ENCODE measurements at regions of chr11 and their contacts with region 1.

Region 1: DNA sequence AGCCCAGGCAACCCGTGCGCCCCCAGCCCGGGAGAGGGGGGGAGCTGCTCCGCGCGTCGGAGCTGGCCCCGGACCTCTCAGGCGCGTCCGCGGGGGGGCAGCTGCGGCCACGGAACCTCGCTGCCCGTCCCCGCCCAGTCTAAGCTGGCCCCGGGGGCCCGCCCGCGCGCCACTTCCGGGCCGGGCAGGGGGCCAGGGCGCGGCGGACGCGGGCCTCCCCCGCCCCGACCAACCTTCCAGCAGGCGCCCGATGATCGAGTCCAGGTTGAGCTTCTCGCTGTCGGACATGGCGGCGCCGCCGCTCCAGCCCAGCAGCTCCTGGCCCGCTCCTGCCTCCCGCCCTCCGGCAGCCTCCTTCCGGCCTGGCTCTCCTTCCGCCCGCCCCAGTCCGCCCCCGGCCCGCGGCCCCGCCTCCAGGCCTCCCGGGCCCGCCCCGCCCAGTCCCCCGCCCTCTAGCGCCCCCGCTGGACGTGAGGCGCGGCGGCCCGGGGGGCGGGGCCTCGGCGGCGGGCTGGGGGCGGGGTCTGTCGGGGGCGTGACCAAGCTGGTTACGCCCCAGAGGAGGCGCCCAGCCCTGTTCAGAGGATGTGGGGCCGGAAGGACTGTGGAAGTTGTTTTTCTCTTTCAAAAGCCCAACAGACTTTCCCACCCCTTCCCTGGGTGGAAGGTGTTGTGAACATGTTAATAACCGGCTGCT is at the start of gene PPP1CA:
- DNase-seq: peak; percentile 91 to 95 (median 93)
- H3K4me3 ChIP-seq: peak within 1 kb of the TSS; percentile 91
- H3K27ac ChIP-seq: peak within 1 kb of the TSS; percentile 19 to 86
- H3K4me1 ChIP-seq: peaks cover 1% of the 10 kb centered on the region
- H3K27me3 ChIP-seq: no peaks in the 10 kb centered on the region
- CTCF ChIP-seq: peak; percentile 27 to 36 (median 29)
- EP300 ChIP-seq: no peak
- POLR2A ChIP-seq: peak; percentile 70
- total RNA-seq, gene PPP1CA: 32.2 to 86.9 (median 55.5) TPM

Region 2: DNA sequence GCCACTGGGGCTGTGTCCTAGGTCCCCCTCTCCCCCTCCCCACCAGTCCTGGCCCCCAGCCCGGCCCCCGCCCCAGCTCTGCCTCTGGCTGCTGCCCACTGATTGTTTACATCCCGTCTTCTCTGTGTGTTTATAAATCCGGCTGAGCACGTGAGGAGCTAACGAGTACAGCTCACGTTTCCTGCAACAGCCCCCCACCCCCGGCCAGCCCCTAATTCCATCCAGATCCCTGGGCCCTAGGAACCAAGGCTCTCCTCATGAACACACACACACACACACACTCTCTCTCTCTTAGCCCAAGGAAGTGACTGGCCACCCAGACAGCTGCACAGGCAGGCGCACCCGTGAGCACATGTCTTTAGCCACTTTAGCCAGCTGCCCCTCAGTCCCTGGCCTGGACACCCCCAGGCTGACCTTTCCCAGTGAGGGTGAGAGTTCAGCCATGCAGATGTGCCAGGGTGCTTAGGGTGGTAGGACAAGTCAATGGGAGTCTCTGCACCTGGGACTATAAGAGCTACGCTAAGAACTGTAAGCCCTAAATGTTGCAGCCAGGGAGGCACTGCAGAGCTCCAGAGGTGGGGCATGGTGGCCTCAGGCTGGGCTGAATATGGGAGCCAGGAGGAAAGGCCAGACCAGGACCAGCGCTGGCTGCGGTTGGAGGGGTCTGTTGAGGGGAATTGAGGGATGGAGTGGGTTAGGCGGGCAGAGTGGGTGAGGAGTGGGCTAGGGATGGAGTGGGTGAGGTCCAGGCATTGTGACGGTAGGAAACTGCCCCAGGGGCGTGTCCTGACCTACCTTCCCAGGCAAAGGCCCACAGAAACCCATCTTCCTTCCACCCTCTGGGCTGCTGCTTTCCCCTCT is 31.1 kb before region 1 on chr11:
- intact Hi-C with region 1: no loop called
- DNase-seq: peak in 3 of 5 donors; percentile 36 to 55 (median 38)
- H3K4me3 ChIP-seq: no peak overlapping the region
- H3K27ac ChIP-seq: peak overlapping the region; percentile 33 to 62
- H3K4me1 ChIP-seq: peaks cover 38% of the 10 kb centered on the region
- H3K27me3 ChIP-seq: no peaks in the 10 kb centered on the region
- CTCF ChIP-seq: no peak
- EP300 ChIP-seq: no peak
- POLR2A ChIP-seq: no peak

Region 3: DNA sequence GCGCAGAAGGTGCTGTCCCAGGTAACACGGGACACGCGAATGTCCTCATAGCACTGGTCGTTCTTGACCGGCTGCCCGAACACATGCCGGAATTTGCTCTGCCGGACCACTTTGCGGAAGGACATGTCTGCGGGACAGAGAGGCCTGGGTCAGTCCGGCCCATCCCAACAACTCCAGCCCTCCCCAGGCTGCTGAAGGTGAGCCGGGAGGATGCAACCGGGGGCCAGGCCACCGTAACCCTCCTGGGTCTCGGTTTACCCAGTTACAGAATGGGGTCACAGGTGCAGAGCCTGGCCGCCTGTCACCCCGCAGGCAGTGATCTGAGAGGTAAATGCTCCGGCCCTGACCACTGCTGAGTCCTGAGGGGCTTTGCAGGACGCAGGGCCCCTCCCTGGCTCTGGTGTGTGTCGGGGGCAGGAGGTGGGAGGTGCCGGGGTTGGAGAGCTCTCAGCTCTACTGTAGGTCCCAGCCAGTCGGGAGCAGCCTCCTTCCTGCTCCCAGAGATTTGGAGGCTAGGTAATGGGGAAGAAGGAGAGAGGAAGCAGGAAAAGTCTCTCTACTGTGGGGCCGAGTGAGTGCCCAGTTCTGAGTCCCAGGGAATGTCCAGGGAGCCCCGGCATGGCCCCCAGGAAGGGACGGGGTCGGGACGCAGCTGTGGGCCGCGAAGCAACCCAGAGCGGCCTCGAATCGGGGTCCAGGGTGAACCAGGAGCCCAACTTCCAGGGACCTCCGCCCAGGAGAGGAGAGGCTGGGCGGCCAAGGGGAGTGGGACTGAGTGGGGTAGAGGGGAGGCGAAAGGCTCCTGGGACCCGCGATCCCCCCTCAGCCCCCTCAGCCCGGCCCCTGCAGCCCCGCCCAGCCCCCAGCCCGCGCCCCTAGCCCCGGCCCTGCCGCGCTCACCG is 41.1 kb after region 1 on chr11:
- intact Hi-C with region 1: loop called in 1 of 4 experiments (anchors 1 kb)
- DNase-seq: peak in 2 of 5 donors; percentile 36 to 43
- H3K4me3 ChIP-seq: peak overlapping the region; percentile 69
- H3K27ac ChIP-seq: peak overlapping the region; percentile 94
- H3K4me1 ChIP-seq: peaks cover 4% of the 10 kb centered on the region
- H3K27me3 ChIP-seq: no peaks in the 10 kb centered on the region
- CTCF ChIP-seq: no peak
- EP300 ChIP-seq: no peak
- POLR2A ChIP-seq: no peak

Region 4: DNA sequence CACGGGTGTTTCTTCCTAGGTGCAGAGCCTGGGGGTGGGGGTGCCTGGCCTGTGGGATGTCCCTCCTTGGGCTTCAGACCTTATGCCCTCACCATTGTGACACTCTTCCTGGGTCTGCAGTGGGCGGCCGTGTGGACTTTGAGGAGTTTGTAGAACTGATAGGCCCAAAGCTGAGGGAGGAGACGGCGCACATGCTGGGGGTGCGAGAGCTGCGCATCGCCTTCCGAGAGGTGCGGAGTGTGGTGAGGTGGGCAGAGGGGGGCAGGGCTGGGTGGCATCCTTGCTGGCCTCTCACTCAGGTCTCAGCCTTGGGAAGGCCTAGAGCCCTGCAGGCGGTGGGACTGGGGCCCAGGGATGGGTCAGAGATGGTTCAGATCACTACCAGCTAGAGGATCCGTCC is 55.8 kb after region 1 on chr11:
- intact Hi-C with region 1: no loop called
- DNase-seq: peak in 2 of 5 donors; percentile 13 to 14
- H3K4me3 ChIP-seq: no peak overlapping the region
- H3K27ac ChIP-seq: no peak overlapping the region
- H3K4me1 ChIP-seq: no peaks in the 10 kb centered on the region
- H3K27me3 ChIP-seq: no peaks in the 10 kb centered on the region
- CTCF ChIP-seq: no peak
- EP300 ChIP-seq: no peak
- POLR2A ChIP-seq: no peak

Region 5: GRCh38 chr11:67468835-67469811 is 67.5 kb after region 1 on chr11 and contains the start of gene TMEM134:
- intact Hi-C with region 1: loop called in 2 of 4 experiments (anchors 1 to 5 kb)
- DNase-seq: peak; percentile 90 to 94 (median 93)
- H3K4me3 ChIP-seq: peak within 1 kb of the TSS; percentile 93
- H3K27ac ChIP-seq: peak within 1 kb of the TSS; percentile 37 to 84
- H3K4me1 ChIP-seq: peaks cover 7% of the 10 kb centered on the region
- H3K27me3 ChIP-seq: no peaks in the 10 kb centered on the region
- CTCF ChIP-seq: peak in 2 of 3 donors; percentile 46 to 49
- EP300 ChIP-seq: no peak
- POLR2A ChIP-seq: peak; percentile 51
- total RNA-seq, gene TMEM134: 37.6 to 69.8 (median 44.8) TPM

Region 6: DNA sequence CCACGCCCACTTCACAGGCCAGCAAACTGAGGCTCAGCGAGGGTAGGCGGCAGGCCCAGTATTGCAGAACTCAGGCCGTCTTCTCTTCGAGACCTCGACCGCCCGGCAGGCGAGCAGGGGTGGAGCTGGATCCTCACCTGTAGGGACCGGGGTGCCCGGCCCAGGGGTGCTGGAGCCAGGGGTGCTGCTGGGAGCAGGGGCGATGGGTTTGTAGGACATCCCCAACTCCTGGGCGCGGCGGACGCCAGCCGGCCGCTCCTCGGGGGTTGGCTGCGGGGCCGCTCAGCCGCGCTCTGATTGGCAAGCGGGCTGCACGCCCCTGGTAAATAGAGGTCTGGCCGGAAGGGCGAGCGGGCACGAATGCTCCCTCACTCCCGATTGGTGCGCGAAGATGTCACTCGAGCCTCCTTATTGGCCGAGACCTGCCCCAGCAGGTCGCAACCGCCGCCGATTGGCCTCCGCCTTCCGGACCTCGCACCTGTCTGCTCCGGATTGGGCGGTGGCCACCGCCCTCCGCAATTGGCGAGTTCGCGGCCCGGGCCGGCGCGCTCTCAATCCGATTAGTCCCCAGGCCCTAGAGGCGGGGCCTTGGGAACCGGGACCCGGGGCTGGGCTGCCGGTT is 106.3 kb after region 1 on chr11 and contains the start of gene CDK2AP2:
- intact Hi-C with region 1: loop called in 3 of 4 experiments (anchors 2 to 10 kb)
- DNase-seq: peak; percentile 98 to 100 (median 99)
- H3K4me3 ChIP-seq: peak within 1 kb of the TSS; percentile 80
- H3K27ac ChIP-seq: peak within 1 kb of the TSS; percentile 63 to 79
- H3K4me1 ChIP-seq: peaks cover 13% of the 10 kb centered on the region
- H3K27me3 ChIP-seq: no peaks in the 10 kb centered on the region
- CTCF ChIP-seq: peak in 1 of 3 donors; percentile 22
- EP300 ChIP-seq: no peak
- POLR2A ChIP-seq: peak; percentile 68
- total RNA-seq, gene CDK2AP2: 15.8 to 66.1 (median 34.6) TPM

Region 7: DNA sequence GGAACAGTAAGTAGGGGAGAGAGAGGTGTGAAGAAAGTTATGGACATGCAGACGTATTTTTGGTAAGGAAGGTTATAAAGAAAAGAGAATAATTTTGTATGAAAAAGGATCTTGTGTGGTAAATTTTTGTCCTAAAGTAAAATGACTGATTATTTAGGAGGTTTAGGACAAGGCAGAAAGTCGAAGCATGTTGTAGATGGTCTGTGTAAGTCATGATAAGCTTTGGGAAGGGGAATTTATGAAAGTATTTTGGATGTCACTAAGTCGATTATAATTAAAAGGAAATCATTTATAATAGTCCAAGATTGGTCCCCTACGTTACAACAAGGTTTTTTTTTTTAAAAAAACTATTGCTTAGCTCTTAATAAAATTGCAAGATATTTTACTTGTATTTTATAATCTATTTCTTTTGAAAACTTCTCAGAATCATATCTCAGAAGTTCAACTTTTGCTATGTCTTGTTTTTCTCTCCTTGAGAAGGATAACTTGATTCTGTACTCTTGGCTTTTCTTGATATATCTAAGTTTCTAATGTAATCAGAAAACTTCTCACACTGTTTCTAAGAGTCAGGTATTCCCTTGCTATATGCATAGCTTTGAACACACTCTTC is 132.5 kb after region 1 on chr11:
- intact Hi-C with region 1: no loop called
- DNase-seq: no peak
- H3K4me3 ChIP-seq: no peak overlapping the region
- H3K27ac ChIP-seq: no peak overlapping the region
- H3K4me1 ChIP-seq: peaks cover 6% of the 10 kb centered on the region
- H3K27me3 ChIP-seq: no peaks in the 10 kb centered on the region
- CTCF ChIP-seq: no peak
- EP300 ChIP-seq: no peak
- POLR2A ChIP-seq: no peak